ENCODE measurements at regions of chr20 and their contacts with region 1.

Region 1: GRCh38 chr20:8722276-8722928 is 346.5 kb upstream of the PLCB4 start:
- DNase-seq: no peak
- ATAC-seq: no peak
- H3K4me3 Mint-ChIP-seq: no peak overlapping the region
- H3K27ac Mint-ChIP-seq: no peak overlapping the region
- H3K4me1 Mint-ChIP-seq: no peaks in the 10 kb centered on the region
- H3K27me3 Mint-ChIP-seq: no peaks in the 10 kb centered on the region
- CTCF ChIP-seq: no peak

Region 2: GRCh38 chr20:6828794-6829423 is 1893.5 kb before region 1 on chr20:
- CTCF ChIA-PET with region 1: interaction called, 25 read pairs
- POLR2A ChIA-PET with region 1: no interaction called
- intact Hi-C with region 1: no loop called
- DNase-seq: no peak
- ATAC-seq: peak; percentile 56
- H3K4me3 Mint-ChIP-seq: no peak overlapping the region
- H3K27ac Mint-ChIP-seq: no peak overlapping the region
- H3K4me1 Mint-ChIP-seq: no peaks in the 10 kb centered on the region
- H3K27me3 Mint-ChIP-seq: no peaks in the 10 kb centered on the region
- CTCF ChIP-seq: no peak

Region 3: GRCh38 chr20:7980332-7981046 is 741.9 kb before region 1 on chr20:
- CTCF ChIA-PET with region 1: interaction called, 12 read pairs
- POLR2A ChIA-PET with region 1: no interaction called
- intact Hi-C with region 1: loop called (anchors 1 kb)
- DNase-seq: no peak
- ATAC-seq: no peak
- H3K4me3 Mint-ChIP-seq: no peak overlapping the region
- H3K27ac Mint-ChIP-seq: no peak overlapping the region
- H3K4me1 Mint-ChIP-seq: no peaks in the 10 kb centered on the region
- H3K27me3 Mint-ChIP-seq: no peaks in the 10 kb centered on the region
- CTCF ChIP-seq: no peak

Region 4: GRCh38 chr20:8131598-8132483 is 590.6 kb before region 1 on chr20 and contains the start of gene PLCB1:
- CTCF ChIA-PET with region 1: interaction called, 12 read pairs
- POLR2A ChIA-PET with region 1: no interaction called
- intact Hi-C with region 1: no loop called
- DNase-seq: peak; percentile 36
- ATAC-seq: peak; percentile 92
- H3K4me3 Mint-ChIP-seq: peak within 1 kb of the TSS; percentile 69
- H3K27ac Mint-ChIP-seq: no peak within 1 kb of the TSS
- H3K4me1 Mint-ChIP-seq: peaks cover 13% of the 10 kb centered on the region
- H3K27me3 Mint-ChIP-seq: peaks cover 34% of the 10 kb centered on the region
- CTCF ChIP-seq: no peak
- total RNA-seq, gene PLCB1: 0.29 and 0.86 TPM in 2 replicates

Region 5: GRCh38 chr20:8735674-8736073 is 13.3 kb after region 1 on chr20:
- CTCF ChIA-PET with region 1: interaction called, 11 read pairs
- POLR2A ChIA-PET with region 1: no interaction called
- intact Hi-C with region 1: no loop called
- DNase-seq: no peak
- ATAC-seq: no peak
- H3K4me3 Mint-ChIP-seq: no peak overlapping the region
- H3K27ac Mint-ChIP-seq: no peak overlapping the region
- H3K4me1 Mint-ChIP-seq: no peaks in the 10 kb centered on the region
- H3K27me3 Mint-ChIP-seq: no peaks in the 10 kb centered on the region
- CTCF ChIP-seq: no peak

Measured in activated B cell treated with CpG ODN at 0.5 μM for 24 hours (primary cell).